Activated B cell treated with CpG ODN at 0.5 μM for 24 hours (primary cell): ENCODE measurements at regions of chr2 and their contacts with region 1.

Region 1: DNA sequence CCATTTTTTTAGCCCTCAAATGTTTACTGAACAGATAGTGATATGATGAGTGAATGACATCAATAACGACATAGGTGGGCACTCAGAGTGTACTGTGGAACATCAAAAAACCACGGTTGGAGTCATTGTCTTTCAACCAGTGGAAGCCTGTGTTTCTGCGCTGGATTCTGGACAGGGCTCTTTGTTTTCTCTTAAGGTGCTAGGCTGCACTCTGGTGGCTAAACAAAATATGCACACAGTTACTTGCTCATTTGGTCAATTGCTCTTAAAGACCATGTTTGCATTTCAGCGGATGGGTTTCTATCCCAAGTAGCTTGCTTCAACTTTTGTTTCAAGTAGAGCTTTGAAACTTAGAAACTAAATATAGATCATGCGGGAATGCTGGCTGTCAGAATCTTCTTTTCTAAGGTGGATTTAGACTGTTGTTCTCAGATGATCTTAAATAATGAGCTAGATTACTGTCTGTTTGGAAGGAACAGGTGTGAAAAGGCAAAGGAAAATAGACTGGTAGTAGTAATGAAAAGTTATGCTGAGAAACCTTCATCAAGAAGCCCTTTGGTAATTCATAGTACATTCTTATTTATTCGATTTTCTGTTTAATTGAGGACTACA is 48.5 kb upstream of the LYPD6B start:
- DNase-seq: no peak
- ATAC-seq: peak; percentile 40
- H3K4me3 Mint-ChIP-seq: no peak overlapping the region
- H3K27ac Mint-ChIP-seq: no peak overlapping the region
- H3K4me1 Mint-ChIP-seq: peaks cover 13% of the 10 kb centered on the region
- H3K27me3 Mint-ChIP-seq: no peaks in the 10 kb centered on the region
- CTCF ChIP-seq: no peak

Region 2: DNA sequence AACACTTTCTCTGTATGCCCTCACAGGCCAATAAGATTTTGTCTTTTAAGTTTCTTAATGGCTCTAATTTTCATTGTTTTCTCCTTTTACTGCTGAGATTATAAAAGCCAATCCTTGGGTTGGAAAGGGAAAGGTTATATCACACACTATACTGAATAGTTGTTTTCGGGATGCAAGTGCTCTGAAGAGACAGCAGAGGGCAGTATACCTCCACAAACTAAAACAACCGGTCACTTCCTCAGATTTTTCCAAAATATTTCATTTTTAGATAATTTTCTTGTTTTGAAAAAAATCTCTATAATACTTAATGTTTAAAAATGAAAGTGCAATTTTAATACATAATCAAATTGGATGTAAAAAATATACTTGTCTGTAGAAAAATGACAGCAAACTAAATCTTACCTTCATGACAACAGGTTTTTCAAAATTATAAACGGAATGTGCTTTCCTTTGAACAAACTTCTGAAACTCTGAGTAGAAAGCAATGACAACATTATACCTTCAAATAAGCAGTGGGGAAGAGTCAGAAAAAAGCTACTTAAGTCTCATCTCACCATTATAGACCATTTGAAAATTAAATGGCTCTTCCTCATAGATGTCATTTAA is 1052.1 kb before region 1 on chr2:
- CTCF ChIA-PET with region 1: interaction called, 15 read pairs
- POLR2A ChIA-PET with region 1: no interaction called
- intact Hi-C with region 1: loop called (anchors 1 kb)
- DNase-seq: no peak
- ATAC-seq: peak; percentile 37
- H3K4me3 Mint-ChIP-seq: no peak overlapping the region
- H3K27ac Mint-ChIP-seq: no peak overlapping the region
- H3K4me1 Mint-ChIP-seq: no peaks in the 10 kb centered on the region
- H3K27me3 Mint-ChIP-seq: no peaks in the 10 kb centered on the region
- CTCF ChIP-seq: peak; percentile 95

Region 3: GRCh38 chr2:148565272-148565894 is 424.6 kb before region 1 on chr2:
- CTCF ChIA-PET with region 1: interaction called, 4 read pairs
- POLR2A ChIA-PET with region 1: no interaction called
- intact Hi-C with region 1: loop called (anchors 1 kb)
- DNase-seq: no peak
- ATAC-seq: no peak
- H3K4me3 Mint-ChIP-seq: no peak overlapping the region
- H3K27ac Mint-ChIP-seq: no peak overlapping the region
- H3K4me1 Mint-ChIP-seq: no peaks in the 10 kb centered on the region
- H3K27me3 Mint-ChIP-seq: peaks cover 2% of the 10 kb centered on the region
- CTCF ChIP-seq: no peak

Region 4: GRCh38 chr2:148781544-148781943 is 208.4 kb before region 1 on chr2:
- CTCF ChIA-PET with region 1: interaction called, 3 read pairs
- POLR2A ChIA-PET with region 1: no interaction called
- intact Hi-C with region 1: loop called (anchors 10 kb)
- DNase-seq: no peak
- ATAC-seq: no peak
- H3K4me3 Mint-ChIP-seq: no peak overlapping the region
- H3K27ac Mint-ChIP-seq: no peak overlapping the region
- H3K4me1 Mint-ChIP-seq: no peaks in the 10 kb centered on the region
- H3K27me3 Mint-ChIP-seq: no peaks in the 10 kb centered on the region
- CTCF ChIP-seq: no peak

Region 5: GRCh38 chr2:148926291-148926961 is 63.6 kb before region 1 on chr2:
- CTCF ChIA-PET with region 1: no interaction called
- POLR2A ChIA-PET with region 1: no interaction called
- intact Hi-C with region 1: loop called (anchors 1 kb)
- DNase-seq: peak; percentile 24
- ATAC-seq: peak; percentile 88
- H3K4me3 Mint-ChIP-seq: peak overlapping the region; percentile 79
- H3K27ac Mint-ChIP-seq: peak overlapping the region; percentile 76
- H3K4me1 Mint-ChIP-seq: peaks cover 16% of the 10 kb centered on the region
- H3K27me3 Mint-ChIP-seq: no peaks in the 10 kb centered on the region
- CTCF ChIP-seq: no peak